Gastrocnemius medialis (tissue), 4 donors: ENCODE measurements at regions of chr12 and their contacts with region 1.

Region 1: GRCh38 chr12:132986001-132986912 is at the start of gene ZNF26:
- DNase-seq: peak; percentile 81 to 86
- ATAC-seq: peak; percentile 99 to 100
- H3K4me3 ChIP-seq: peak within 1 kb of the TSS; percentile 77 to 98 (median 88)
- H3K27ac ChIP-seq: peak within 1 kb of the TSS; percentile 86 to 88 (median 87)
- H3K4me1 ChIP-seq: peaks cover 12 to 13% of the 10 kb centered on the region in 2 donors
- H3K27me3 ChIP-seq: no peaks in the 10 kb centered on the region
- CTCF ChIP-seq: no peak
- POLR2A ChIP-seq: peak; percentile 30 to 50
- total RNA-seq, gene ZNF26: 1.2 to 12.3 (median 2.6) TPM

Region 2: DNA sequence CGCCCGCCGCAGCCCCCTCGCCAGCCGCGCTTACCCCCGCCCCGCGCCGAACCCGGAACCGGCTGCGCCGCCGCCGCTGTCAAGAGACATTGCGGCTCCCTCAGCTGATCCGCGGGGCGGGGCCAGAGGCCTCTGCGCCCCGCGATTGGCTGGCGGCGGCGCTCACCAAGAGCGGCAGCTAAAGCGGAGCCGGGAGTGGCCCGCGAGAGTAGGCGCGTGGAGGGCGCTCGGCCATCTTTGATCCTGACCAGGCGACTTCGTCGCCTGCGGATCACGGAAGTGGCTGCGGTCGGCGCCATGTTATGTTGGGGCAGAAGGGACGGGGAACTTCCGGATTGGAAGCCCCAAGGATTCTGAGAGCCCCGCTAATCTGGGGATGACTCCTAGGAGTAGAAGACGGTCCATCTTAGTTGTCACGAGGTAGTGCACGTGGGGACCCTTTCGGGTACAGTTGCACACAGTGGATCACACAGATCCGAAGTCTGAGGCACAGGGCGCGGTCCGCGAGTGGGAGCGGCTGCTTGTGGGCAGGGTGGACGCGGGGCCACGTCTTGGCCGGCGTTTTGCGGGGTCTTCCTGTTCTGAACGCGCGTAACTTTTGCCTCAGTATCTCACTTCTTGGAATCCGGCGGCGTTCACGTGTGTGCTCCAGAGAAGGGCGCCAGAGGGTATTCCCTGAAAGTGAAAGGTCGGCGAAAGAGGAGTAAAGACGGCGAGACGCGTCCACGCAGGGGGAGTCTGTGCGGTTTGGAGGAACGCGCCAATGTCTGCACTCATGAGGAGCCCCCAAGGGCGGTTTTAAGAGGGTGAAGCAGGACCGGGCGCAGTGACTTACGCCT is 98.5 kb before region 1 on chr12 and contains the start of gene CHFR:
- in situ Hi-C with region 1: no loop called
- intact Hi-C with region 1: loop called (anchors 2 kb)
- DNase-seq: peak; percentile 84 to 91
- ATAC-seq: peak; percentile 97
- H3K4me3 ChIP-seq: peak within 1 kb of the TSS; percentile 73 to 91 (median 84)
- H3K27ac ChIP-seq: peak within 1 kb of the TSS; percentile 85 to 93 (median 91)
- H3K4me1 ChIP-seq: peaks cover 4 to 7% of the 10 kb centered on the region in 2 donors
- H3K27me3 ChIP-seq: no peaks in the 10 kb centered on the region
- CTCF ChIP-seq: no peak
- POLR2A ChIP-seq: peak; percentile 44 to 54
- total RNA-seq, gene CHFR: 10.8 to 19.6 (median 12.1) TPM

Region 3: GRCh38 chr12:132966676-132967415 is 19.4 kb before region 1 on chr12:
- in situ Hi-C with region 1: no loop called
- intact Hi-C with region 1: no loop called
- DNase-seq: no peak
- ATAC-seq: no peak
- H3K4me3 ChIP-seq: no peak overlapping the region
- H3K27ac ChIP-seq: no peak overlapping the region
- H3K4me1 ChIP-seq: no peaks in the 10 kb centered on the region
- H3K27me3 ChIP-seq: no peaks in the 10 kb centered on the region
- CTCF ChIP-seq: no peak
- POLR2A ChIP-seq: no peak

Region 4: DNA sequence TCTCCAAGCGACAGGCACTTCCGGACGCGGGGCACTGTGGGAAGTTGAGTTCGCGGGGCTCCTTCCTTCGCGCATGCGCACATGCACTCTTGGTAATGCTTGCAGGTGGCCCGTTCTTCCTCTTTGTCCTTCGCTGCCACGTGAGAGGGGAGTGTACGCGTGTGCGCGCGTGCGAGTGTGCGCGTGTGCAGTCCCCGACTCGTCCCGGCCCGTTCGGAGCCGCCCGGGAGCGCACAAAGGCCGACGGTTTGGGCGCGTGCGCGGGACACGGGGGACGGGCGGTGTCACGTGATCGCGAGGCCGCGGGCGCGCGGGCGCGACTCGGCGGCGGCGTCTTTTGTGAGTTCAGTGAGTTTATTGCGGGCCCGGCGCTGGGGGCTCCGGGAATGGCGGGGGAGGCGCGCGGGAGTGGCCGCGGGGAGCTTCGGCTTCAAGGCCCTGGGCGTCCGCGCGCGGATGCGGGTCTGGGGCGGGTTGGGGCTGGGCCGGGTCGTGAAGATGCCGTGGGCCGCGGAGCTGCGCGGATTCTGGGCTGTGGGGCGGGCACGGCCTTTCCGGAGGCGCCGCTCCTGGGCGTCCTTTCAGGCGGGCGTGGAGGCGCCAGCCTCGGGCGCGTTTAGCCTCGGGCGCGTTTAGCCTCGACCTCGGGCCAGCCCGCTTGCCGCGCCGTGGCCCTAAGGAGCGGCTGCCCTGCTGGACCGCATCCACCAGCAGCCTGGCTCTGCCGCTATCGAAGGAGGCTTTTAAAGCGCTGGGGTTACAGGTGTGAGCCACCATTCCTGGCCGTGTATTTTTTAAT is 51.1 kb after region 1 on chr12 and contains the start of gene ZNF84:
- in situ Hi-C with region 1: loop called in 3 of 4 experiments (anchors 5 kb)
- intact Hi-C with region 1: loop called (anchors 1 kb)
- DNase-seq: peak; percentile 93 to 94
- ATAC-seq: peak; percentile 96 to 99
- H3K4me3 ChIP-seq: peak within 1 kb of the TSS; percentile 74 to 90 (median 80)
- H3K27ac ChIP-seq: peak within 1 kb of the TSS; percentile 83 to 97 (median 91)
- H3K4me1 ChIP-seq: peaks cover 11 to 12% of the 10 kb centered on the region in 2 donors
- H3K27me3 ChIP-seq: no peaks in the 10 kb centered on the region
- CTCF ChIP-seq: peak in 2 of 5 experiments; percentile 23 to 47
- POLR2A ChIP-seq: peak; percentile 60 to 61
- total RNA-seq, gene ZNF84: 5.3 to 20.9 (median 13.5) TPM

Region 5: DNA sequence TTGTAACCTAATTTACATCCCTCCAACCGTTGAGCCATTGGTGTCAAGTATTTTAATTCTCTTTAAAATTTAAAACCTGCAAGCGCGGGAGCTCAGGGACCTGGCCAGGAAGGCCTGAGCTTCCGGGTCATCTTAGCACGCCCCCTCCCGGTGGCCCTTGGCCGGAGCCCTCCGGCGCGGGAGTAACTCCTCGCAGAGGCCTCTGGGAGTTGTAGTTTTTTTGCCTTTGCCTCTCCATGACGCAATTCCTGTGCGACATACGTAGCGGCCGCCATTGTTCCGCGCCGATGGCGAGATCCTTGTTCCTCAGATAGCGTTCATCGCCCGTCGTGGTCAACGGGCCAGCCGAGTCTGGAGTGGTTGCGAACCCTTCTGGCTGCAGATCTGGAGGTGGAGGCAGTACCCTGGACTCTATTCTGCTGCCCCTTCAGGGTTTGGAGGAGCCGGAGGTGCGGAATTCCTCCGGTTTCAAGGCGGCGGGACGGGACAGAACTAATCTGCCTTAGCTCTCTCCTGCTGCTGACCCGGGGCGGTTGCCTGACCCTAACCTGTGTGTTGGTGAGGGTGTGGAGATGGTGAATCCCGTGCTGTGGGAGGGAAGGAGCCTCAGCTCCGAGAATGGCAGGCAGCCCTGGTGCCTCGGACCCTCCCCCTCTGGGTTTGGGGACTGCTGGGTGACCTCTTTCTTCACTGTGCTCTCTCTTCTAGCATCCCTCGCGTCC is 195.1 kb after region 1 on chr12 and contains the start of gene ZNF268:
- in situ Hi-C with region 1: no loop called
- intact Hi-C with region 1: loop called (anchors 1 kb)
- DNase-seq: peak; percentile 68 to 83
- ATAC-seq: peak; percentile 90 to 100
- H3K4me3 ChIP-seq: peak within 1 kb of the TSS; percentile 65 to 91 (median 84)
- H3K27ac ChIP-seq: peak within 1 kb of the TSS; percentile 44 to 76 (median 62)
- H3K4me1 ChIP-seq: peaks cover 7 to 9% of the 10 kb centered on the region in 2 donors
- H3K27me3 ChIP-seq: no peaks in the 10 kb centered on the region
- CTCF ChIP-seq: peak; percentile 40 to 76 (median 75)
- POLR2A ChIP-seq: no peak
- total RNA-seq, gene ZNF268: 3.8 to 8.9 (median 4.3) TPM